GM12878 (cell line): ENCODE measurements at regions of chr6 and their contacts with region 1.

Region 1: GRCh38 chr6:33014841-33015634 is 5.6 kb upstream of the HLA-DOA start:
- DNase-seq: peak; percentile 75
- ATAC-seq: peak; percentile 81
- H3K4me3 ChIP-seq: no peak overlapping the region
- H3K27ac ChIP-seq: no peak overlapping the region
- H3K4me1 ChIP-seq: peaks cover 20% of the 10 kb centered on the region
- H3K27me3 ChIP-seq: no peaks in the 10 kb centered on the region
- CTCF ChIP-seq: peak; percentile 57 to 80 (median 68); a peak in 5 of 6 replicates
- EP300 ChIP-seq: no peak
- POLR2A ChIP-seq: no peak
- RAD21 ChIP-seq: peak; percentile 94

Region 2: GRCh38 chr6:32845384-32845884 is 169.6 kb before region 1 on chr6:
- CTCF ChIA-PET with region 1: no interaction called
- POLR2A ChIA-PET with region 1: no interaction called
- RAD21 ChIA-PET with region 1: no interaction called
- SMC1A ChIA-PET with region 1: no interaction called
- in situ Hi-C with region 1: no loop called
- intact Hi-C with region 1: no loop called
- DNase-seq: no peak
- ATAC-seq: peak; percentile 33
- H3K4me3 ChIP-seq: peak overlapping the region; percentile 96
- H3K27ac ChIP-seq: peak overlapping the region; percentile 96
- H3K4me1 ChIP-seq: peaks cover 63% of the 10 kb centered on the region
- H3K27me3 ChIP-seq: no peaks in the 10 kb centered on the region
- CTCF ChIP-seq: no peak
- EP300 ChIP-seq: no peak
- POLR2A ChIP-seq: peak; percentile 79
- RAD21 ChIP-seq: no peak

Region 3: GRCh38 chr6:33029328-33030184 is 14.5 kb after region 1 on chr6:
- CTCF ChIA-PET with region 1: interaction called, 165 read pairs
- POLR2A ChIA-PET with region 1: interaction called, 120 read pairs
- RAD21 ChIA-PET with region 1: interaction called, 132 read pairs
- SMC1A ChIA-PET with region 1: interaction called, 157 read pairs
- in situ Hi-C with region 1: no loop called
- intact Hi-C with region 1: no loop called
- DNase-seq: peak; percentile 94
- ATAC-seq: peak; percentile 89
- H3K4me3 ChIP-seq: peak overlapping the region; percentile 49
- H3K27ac ChIP-seq: peak overlapping the region; percentile 100
- H3K4me1 ChIP-seq: peaks cover 36% of the 10 kb centered on the region
- H3K27me3 ChIP-seq: no peaks in the 10 kb centered on the region
- CTCF ChIP-seq: peak in 2 of 3 experiments; percentile 4 to 22; a peak in 1 of 6 replicates
- EP300 ChIP-seq: peak; percentile 86 to 88
- POLR2A ChIP-seq: peak; percentile 83
- RAD21 ChIP-seq: peak; percentile 31; the same call in 1 of the 2 replicates

Region 4: GRCh38 chr6:33061987-33062386 is 46.9 kb after region 1 on chr6:
- CTCF ChIA-PET with region 1: interaction called, 9 read pairs
- POLR2A ChIA-PET with region 1: interaction called, 5 read pairs
- RAD21 ChIA-PET with region 1: interaction called, 6 read pairs
- SMC1A ChIA-PET with region 1: interaction called, 12 read pairs
- in situ Hi-C with region 1: no loop called
- intact Hi-C with region 1: no loop called
- DNase-seq: peak; percentile 62
- ATAC-seq: peak; percentile 94
- H3K4me3 ChIP-seq: no peak overlapping the region
- H3K27ac ChIP-seq: peak overlapping the region; percentile 66
- H3K4me1 ChIP-seq: peaks cover 13% of the 10 kb centered on the region
- H3K27me3 ChIP-seq: no peaks in the 10 kb centered on the region
- CTCF ChIP-seq: no peak
- EP300 ChIP-seq: peak in 1 of 2 experiments; percentile 46; a peak in 1 of 4 replicates
- POLR2A ChIP-seq: no peak
- RAD21 ChIP-seq: no peak

Region 5: GRCh38 chr6:33091957-33092356 is 76.9 kb after region 1 on chr6:
- CTCF ChIA-PET with region 1: interaction called, 281 read pairs
- POLR2A ChIA-PET with region 1: interaction called, 3 read pairs
- RAD21 ChIA-PET with region 1: interaction called, 12 read pairs
- SMC1A ChIA-PET with region 1: interaction called, 54 read pairs
- in situ Hi-C with region 1: no loop called
- intact Hi-C with region 1: loop called (anchors 2 kb)
- DNase-seq: no peak
- ATAC-seq: peak; percentile 95
- H3K4me3 ChIP-seq: no peak overlapping the region
- H3K27ac ChIP-seq: no peak overlapping the region
- H3K4me1 ChIP-seq: no peaks in the 10 kb centered on the region
- H3K27me3 ChIP-seq: no peaks in the 10 kb centered on the region
- CTCF ChIP-seq: peak; percentile 77 to 88 (median 80)
- EP300 ChIP-seq: no peak
- POLR2A ChIP-seq: 0 out of 2 replicates have a peak, but pooled peaks have one; percentile 41
- RAD21 ChIP-seq: peak; percentile 58

Region 6: GRCh38 chr6:33126101-33126714 is 111.2 kb after region 1 on chr6:
- CTCF ChIA-PET with region 1: interaction called, 103 read pairs
- POLR2A ChIA-PET with region 1: interaction called, 4 read pairs
- RAD21 ChIA-PET with region 1: interaction called, 18 read pairs
- SMC1A ChIA-PET with region 1: interaction called, 139 read pairs
- in situ Hi-C with region 1: no loop called
- intact Hi-C with region 1: no loop called
- DNase-seq: no peak
- ATAC-seq: peak; percentile 76
- H3K4me3 ChIP-seq: no peak overlapping the region
- H3K27ac ChIP-seq: no peak overlapping the region
- H3K4me1 ChIP-seq: peaks cover 14% of the 10 kb centered on the region
- H3K27me3 ChIP-seq: no peaks in the 10 kb centered on the region
- CTCF ChIP-seq: peak; percentile 48 to 77 (median 71)
- EP300 ChIP-seq: no peak
- POLR2A ChIP-seq: no peak
- RAD21 ChIP-seq: peak; percentile 30

Region 7: GRCh38 chr6:33172688-33173534 is 157.9 kb after region 1 on chr6:
- CTCF ChIA-PET with region 1: interaction called, 16 read pairs
- POLR2A ChIA-PET with region 1: interaction called, 3 read pairs
- RAD21 ChIA-PET with region 1: interaction called, 4 read pairs
- SMC1A ChIA-PET with region 1: interaction called, 23 read pairs
- in situ Hi-C with region 1: no loop called
- intact Hi-C with region 1: no loop called
- DNase-seq: no peak
- ATAC-seq: peak; percentile 39
- H3K4me3 ChIP-seq: no peak overlapping the region
- H3K27ac ChIP-seq: no peak overlapping the region
- H3K4me1 ChIP-seq: no peaks in the 10 kb centered on the region; the same call in 1 of the 2 replicates
- H3K27me3 ChIP-seq: no peaks in the 10 kb centered on the region
- CTCF ChIP-seq: peak; percentile 80 to 83 (median 83)
- EP300 ChIP-seq: no peak
- POLR2A ChIP-seq: no peak
- RAD21 ChIP-seq: peak; percentile 96